HCT116 (cell line): ENCODE measurements at regions of chr2 and their contacts with region 1.

Region 1: GRCh38 chr2:10072656-10073480 is 7.3 kb downstream of the CYS1 start:
- DNase-seq: peak; percentile 69
- ATAC-seq: peak; percentile 98
- H3K4me3 ChIP-seq: no peak overlapping the region
- H3K27ac ChIP-seq: no peak overlapping the region
- H3K4me1 ChIP-seq: peaks cover 0 to 8% of the 10 kb centered on the region in 2 experiments; a peak in 2 of 4 replicates
- H3K27me3 ChIP-seq: no peaks in the 10 kb centered on the region
- CTCF ChIP-seq: peak; percentile 86 to 93 (median 92)
- POLR2A ChIP-seq: no peak
- RAD21 ChIP-seq: peak; percentile 92

Region 2: DNA sequence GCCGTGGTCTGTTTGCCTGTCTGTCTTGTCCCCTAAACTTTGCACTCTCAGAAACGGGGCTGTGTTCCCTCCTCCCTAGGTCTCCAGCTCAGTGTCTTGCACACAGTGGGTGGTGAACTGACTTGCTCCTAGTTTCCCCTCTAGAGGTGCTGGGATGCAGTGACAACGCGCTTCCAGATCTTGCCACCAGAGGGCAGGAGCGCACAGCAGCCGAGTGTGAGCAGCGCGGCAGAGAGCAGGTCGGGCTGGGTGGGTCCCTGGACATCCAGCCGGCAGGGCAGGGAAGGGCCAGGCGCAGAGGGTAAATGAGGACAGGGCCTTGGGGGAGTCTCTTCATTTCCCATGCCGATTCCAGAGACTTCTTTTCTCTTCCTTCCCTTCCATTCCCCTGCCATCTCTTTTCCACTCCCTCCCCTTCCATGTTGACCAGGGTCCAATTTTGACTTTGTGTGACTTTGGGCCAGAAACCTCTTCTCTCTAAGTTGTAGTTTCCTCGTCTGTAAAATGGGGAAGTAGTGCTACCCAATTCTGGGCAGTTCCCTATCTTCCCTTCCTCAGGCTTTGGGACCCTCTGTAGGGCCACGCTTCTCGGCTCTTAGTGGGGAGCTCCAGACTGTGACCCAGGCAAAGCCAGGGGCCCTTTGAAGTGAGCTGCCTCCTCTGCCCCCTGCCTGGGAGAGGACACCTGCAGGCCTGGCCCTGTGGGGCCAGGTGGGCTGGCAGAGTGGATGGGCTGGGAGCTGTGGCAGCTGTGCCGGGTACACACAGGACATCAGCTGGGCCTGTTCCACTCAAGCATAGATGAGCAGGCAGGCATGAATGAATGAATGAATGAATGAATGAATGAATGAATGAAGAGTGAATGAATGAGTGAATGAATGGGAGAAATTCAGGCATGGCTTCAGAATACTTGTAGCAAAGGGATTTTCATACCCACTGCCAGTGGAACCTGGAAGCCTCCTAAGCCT is 272.9 kb before region 1 on chr2:
- CTCF ChIA-PET with region 1: interaction called, 12 read pairs
- POLR2A ChIA-PET with region 1: no interaction called
- RAD21 ChIA-PET with region 1: interaction called in 1 of 2 experiments, 3 read pairs
- intact Hi-C with region 1: no loop called
- DNase-seq: peak; percentile 72
- ATAC-seq: peak; percentile 84
- H3K4me3 ChIP-seq: no peak overlapping the region
- H3K27ac ChIP-seq: peak overlapping the region; percentile 75; the same call in 1 of the 2 replicates
- H3K4me1 ChIP-seq: peaks cover 31 to 48% of the 10 kb centered on the region in 2 experiments
- H3K27me3 ChIP-seq: no peaks in the 10 kb centered on the region
- CTCF ChIP-seq: peak in 2 of 3 experiments; percentile 97 to 99; a peak in 4 of 6 replicates
- POLR2A ChIP-seq: no peak
- RAD21 ChIP-seq: no peak

Region 3: GRCh38 chr2:10057231-10058107 is 15.4 kb before region 1 on chr2:
- CTCF ChIA-PET with region 1: interaction called, 20 read pairs
- POLR2A ChIA-PET with region 1: no interaction called
- RAD21 ChIA-PET with region 1: no interaction called
- intact Hi-C with region 1: no loop called
- DNase-seq: no peak
- ATAC-seq: peak; percentile 96
- H3K4me3 ChIP-seq: peak overlapping the region; percentile 39 to 50
- H3K27ac ChIP-seq: peak overlapping the region; percentile 54
- H3K4me1 ChIP-seq: peaks cover 17 to 20% of the 10 kb centered on the region in 2 experiments
- H3K27me3 ChIP-seq: no peaks in the 10 kb centered on the region
- CTCF ChIP-seq: no peak
- POLR2A ChIP-seq: no peak
- RAD21 ChIP-seq: no peak

Region 4: GRCh38 chr2:10097352-10098148 is 24.7 kb after region 1 on chr2:
- CTCF ChIA-PET with region 1: interaction called, 91 read pairs
- POLR2A ChIA-PET with region 1: interaction called, 8 read pairs
- RAD21 ChIA-PET with region 1: interaction called, 9 to 22 read pairs
- intact Hi-C with region 1: loop called (anchors 1 kb)
- DNase-seq: no peak
- ATAC-seq: peak; percentile 99
- H3K4me3 ChIP-seq: no peak overlapping the region
- H3K27ac ChIP-seq: no peak overlapping the region
- H3K4me1 ChIP-seq: peaks cover 3 to 19% of the 10 kb centered on the region in 2 experiments; a peak in 3 of 4 replicates
- H3K27me3 ChIP-seq: no peaks in the 10 kb centered on the region
- CTCF ChIP-seq: peak; percentile 90 to 96 (median 94)
- POLR2A ChIP-seq: no peak
- RAD21 ChIP-seq: peak; percentile 83

Region 5: DNA sequence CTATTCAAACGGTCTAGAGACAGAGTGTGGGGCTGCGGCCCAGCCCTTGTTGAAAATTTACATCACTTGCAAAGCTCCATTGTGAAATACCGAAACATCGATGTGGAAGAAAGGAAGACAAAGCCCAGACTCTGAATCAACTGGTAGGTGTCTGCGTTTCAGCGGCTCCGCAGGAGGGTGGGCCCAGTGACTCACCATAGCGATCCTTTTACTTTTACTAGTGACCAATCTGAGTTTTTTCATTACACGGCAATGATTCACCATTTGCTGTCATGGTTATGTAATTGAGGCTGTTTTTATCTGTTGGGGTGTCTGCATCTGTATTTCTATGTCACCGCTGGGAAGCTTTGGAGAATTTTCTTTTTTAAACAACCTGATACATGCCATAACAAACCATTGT is 441.9 kb after region 1 on chr2:
- CTCF ChIA-PET with region 1: no interaction called
- POLR2A ChIA-PET with region 1: no interaction called
- RAD21 ChIA-PET with region 1: no interaction called
- intact Hi-C with region 1: no loop called
- DNase-seq: no peak
- ATAC-seq: peak; percentile 60; the same call in 1 of the 2 replicates
- H3K4me3 ChIP-seq: no peak overlapping the region
- H3K27ac ChIP-seq: no peak overlapping the region
- H3K4me1 ChIP-seq: peaks cover 0 to 10% of the 10 kb centered on the region in 2 experiments; a peak in 2 of 4 replicates
- H3K27me3 ChIP-seq: no peaks in the 10 kb centered on the region
- CTCF ChIP-seq: no peak
- POLR2A ChIP-seq: no peak
- RAD21 ChIP-seq: no peak

Region 6: GRCh38 chr2:10668402-10669012 is 595.6 kb after region 1 on chr2:
- CTCF ChIA-PET with region 1: no interaction called
- POLR2A ChIA-PET with region 1: no interaction called
- RAD21 ChIA-PET with region 1: no interaction called
- intact Hi-C with region 1: loop called (anchors 5 kb)
- DNase-seq: peak; percentile 57
- ATAC-seq: peak; percentile 52; the same call in 1 of the 2 replicates
- H3K4me3 ChIP-seq: no peak overlapping the region
- H3K27ac ChIP-seq: no peak overlapping the region
- H3K4me1 ChIP-seq: no peaks in the 10 kb centered on the region
- H3K27me3 ChIP-seq: no peaks in the 10 kb centered on the region
- CTCF ChIP-seq: peak; percentile 43 to 73 (median 51); a peak in 5 of 6 replicates
- POLR2A ChIP-seq: no peak
- RAD21 ChIP-seq: peak; percentile 67